Esophagus muscularis mucosa (tissue), 4 donors: ENCODE measurements at regions of chr2 and their contacts with region 1.

Region 1: DNA sequence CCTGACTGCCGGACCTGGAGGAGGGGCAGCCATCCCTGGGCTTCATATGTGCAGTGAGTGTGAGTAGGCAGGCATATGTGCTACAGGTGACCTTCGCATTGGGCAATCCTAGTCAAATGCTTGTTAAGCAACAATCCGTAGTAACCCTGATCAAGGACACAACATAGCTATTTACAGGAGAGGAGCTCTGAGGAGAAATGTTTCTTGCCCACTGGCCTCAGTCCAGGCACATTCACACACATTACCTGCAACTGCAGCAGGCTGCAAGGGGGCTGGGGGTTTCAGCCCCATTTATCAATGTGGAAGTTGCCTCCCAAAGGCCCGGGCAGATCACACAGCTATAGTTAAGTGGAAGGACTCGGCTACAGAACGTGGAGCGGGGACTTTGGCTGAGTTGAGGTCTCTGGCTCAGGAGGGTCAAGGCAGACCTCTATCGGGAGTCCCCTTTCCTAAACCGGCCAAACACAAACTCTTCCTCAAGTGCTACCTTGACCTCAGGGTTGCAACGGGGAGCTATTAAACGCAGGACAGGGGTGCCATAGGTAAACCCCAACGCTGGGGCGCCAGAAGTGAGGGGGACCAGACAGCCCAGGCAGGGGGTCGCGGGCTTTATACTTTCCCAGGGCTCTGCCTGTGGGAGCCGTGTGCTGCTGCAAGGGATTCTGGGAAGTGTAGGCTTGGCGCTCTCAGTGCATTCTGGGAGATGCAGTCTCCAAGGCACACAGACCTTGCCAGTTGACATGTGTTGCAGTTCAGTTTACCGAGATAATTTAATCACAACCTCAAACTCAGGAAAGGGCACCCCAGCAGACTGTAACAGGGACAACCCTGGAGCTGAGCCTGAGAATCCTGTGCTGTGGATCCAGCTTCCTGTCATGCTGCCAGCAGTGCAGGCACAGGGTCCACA is 9.4 kb downstream of the KHK start:
- DNase-seq: no peak
- H3K4me3 ChIP-seq: peak overlapping the region; percentile 42 to 57 (median 46)
- H3K27ac ChIP-seq: no peak overlapping the region
- H3K4me1 ChIP-seq: peaks cover 11 to 13% (median 12%) of the 10 kb centered on the region in 4 donors
- H3K27me3 ChIP-seq: no peaks in the 10 kb centered on the region
- CTCF ChIP-seq: no peak
- EP300 ChIP-seq: no peak
- POLR2A ChIP-seq: no peak

Region 2: GRCh38 chr2:27191053-27191829 is 95.2 kb after region 1 on chr2:
- intact Hi-C with region 1: loop called (anchors 5 kb)
- DNase-seq: no peak
- H3K4me3 ChIP-seq: no peak overlapping the region
- H3K27ac ChIP-seq: no peak overlapping the region
- H3K4me1 ChIP-seq: peaks cover 0 to 2% (median under 1%) of the 10 kb centered on the region in 4 donors
- H3K27me3 ChIP-seq: no peaks in the 10 kb centered on the region
- CTCF ChIP-seq: peak; percentile 47 to 55 (median 53)
- EP300 ChIP-seq: no peak
- POLR2A ChIP-seq: no peak

Region 3: GRCh38 chr2:27559228-27559627 is 463.2 kb after region 1 on chr2:
- intact Hi-C with region 1: no loop called
- DNase-seq: no peak
- H3K4me3 ChIP-seq: no peak overlapping the region
- H3K27ac ChIP-seq: no peak overlapping the region
- H3K4me1 ChIP-seq: no peaks in the 10 kb centered on the region
- H3K27me3 ChIP-seq: peaks cover 0 to 30% (median 0%) of the 10 kb centered on the region in 4 donors
- CTCF ChIP-seq: no peak
- EP300 ChIP-seq: no peak
- POLR2A ChIP-seq: no peak